Psoas muscle (tissue), 8 donors: ENCODE measurements at regions of chr18 and their contacts with region 1.

Region 1: DNA sequence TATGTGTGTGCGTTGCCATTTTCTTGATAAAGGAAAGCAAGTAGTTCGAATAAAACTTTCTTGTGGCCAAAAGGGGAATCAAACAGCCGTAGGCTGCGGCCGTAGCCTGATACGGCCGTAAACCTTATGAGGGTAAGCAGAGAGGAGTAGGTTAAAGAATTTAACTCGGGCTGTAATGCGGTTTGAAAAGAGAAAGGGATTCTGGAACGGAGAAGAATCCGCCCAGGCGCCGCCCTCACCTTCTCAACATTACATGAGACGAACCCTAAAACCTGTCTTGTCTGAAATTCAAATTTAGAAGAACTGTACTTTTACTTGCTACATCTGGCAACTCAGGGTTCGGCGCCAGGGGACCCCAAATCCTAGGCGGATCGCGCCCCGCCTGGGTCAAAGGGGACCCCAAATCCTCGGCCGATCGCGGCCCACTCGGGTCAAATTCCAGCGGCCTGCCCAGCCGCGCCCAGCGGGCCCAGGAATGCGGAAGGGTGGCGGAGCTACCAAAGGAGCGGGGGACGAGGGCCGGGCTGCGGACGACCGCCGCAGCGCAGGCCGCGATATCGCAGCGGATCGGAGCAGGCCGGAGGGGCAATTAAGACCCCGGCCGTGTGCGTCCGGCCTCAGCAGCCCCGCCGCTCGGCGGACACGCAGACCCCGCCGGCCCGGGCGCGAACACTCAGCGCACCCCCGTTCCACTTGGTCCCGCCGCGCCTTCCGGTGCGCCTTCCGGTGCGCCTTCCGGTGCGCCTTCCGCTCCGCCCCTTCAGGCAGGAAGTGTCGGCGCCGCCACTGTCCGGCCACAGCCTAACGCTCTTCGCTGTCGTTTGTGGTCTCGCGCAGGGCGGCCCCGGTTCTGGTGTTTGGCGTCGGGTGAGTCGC is at the start of gene MYL12B:
- DNase-seq: peak; percentile 85 to 92
- ATAC-seq: peak; percentile 83 to 88 (median 86)
- H3K4me3 ChIP-seq: peak within 1 kb of the TSS; percentile 91
- H3K27ac ChIP-seq: peak within 1 kb of the TSS; percentile 99
- H3K4me1 ChIP-seq: peaks cover 68% of the 10 kb centered on the region
- H3K27me3 ChIP-seq: no peaks in the 10 kb centered on the region
- CTCF ChIP-seq: no peak
- total RNA-seq, gene MYL12B: 163 to 212 (median 180) TPM

Region 2: GRCh38 chr18:3447895-3448837 is 186.6 kb after region 1 on chr18:
- intact Hi-C with region 1: loop called (anchors 5 kb)
- DNase-seq: peak; percentile 94 to 97
- ATAC-seq: peak; percentile 67 to 74 (median 71)
- H3K4me3 ChIP-seq: peak overlapping the region; percentile 97
- H3K27ac ChIP-seq: peak overlapping the region; percentile 100
- H3K4me1 ChIP-seq: peaks cover 10% of the 10 kb centered on the region
- H3K27me3 ChIP-seq: no peaks in the 10 kb centered on the region
- CTCF ChIP-seq: peak; percentile 10